ENCODE measurements at regions of chr6 and their contacts with region 1.

Region 1: DNA sequence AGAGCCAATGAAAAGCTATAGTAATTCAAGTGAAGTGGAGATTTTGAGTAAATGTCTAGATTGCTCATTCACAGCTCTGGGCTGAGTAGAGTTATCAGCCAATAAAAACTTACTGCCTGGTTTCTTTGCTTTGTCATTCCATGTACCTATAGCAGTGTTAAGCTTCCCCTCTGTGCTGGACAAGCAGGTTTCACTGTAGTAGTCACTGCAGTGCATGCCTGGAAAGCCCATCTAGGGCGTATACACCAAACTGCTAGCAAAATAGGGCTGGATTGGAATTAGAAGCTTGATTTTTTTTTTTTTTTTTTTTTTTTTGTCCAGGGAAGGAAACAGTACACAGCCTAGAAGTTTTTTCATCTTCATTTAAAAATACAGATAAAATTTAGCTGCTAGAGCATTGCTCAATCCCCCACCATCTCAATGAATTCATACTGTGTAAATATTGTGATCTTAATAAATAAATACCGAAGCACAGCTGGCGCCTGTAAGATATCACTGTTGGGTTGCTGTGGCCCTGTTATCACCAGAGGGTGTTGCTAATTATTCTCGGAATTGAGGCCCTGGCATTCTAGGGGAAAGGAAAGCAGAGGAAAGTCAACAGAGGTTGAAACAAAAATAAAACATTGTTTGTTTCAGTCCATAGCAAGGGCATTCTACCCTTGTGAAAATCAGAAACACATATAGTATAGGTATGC is 968.5 kb upstream of the GJE1 start:
- DNase-seq: no peak
- ATAC-seq: no peak
- H3K4me3 ChIP-seq: no peak overlapping the region
- H3K27ac ChIP-seq: no peak overlapping the region
- H3K4me1 ChIP-seq: no peaks in the 10 kb centered on the region
- H3K27me3 ChIP-seq: no peaks in the 10 kb centered on the region
- CTCF ChIP-seq: no peak

Region 2: DNA sequence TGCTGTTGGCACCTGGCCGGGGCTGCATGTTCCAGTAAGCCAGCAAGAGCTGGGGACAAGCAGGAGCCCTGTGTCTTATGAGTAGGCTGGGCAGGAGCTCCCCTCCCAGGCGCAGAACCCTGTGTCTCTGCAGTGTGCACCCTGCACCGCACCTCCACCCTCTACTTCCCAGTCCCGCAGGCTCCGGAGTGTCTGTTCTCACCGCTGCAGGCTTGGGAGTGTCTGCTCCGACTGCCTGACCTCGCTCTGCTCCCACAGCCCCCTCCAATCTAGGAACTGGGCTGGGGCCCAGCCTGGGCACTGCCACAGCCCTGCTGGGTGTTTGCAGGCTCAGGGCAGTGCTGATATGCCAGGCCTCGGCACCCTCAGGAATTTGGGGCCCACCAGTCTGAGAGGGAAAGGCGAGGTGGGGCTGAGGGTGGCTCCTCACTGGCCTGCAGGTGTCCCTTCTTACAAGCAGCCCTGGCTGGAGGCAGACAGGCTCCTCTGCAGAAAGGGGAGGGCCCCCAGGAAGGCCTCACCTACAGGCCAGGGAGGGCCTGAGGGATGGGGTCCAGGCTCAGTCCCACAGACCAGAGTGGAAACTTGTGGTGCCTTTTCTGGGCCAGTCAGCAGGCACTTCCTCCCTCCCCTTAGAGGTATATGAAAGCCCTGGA is 97.0 kb after region 1 on chr6:
- CTCF ChIA-PET with region 1: no interaction called
- POLR2A ChIA-PET with region 1: interaction called, 11 read pairs
- in situ Hi-C with region 1: no loop called
- intact Hi-C with region 1: no loop called
- DNase-seq: no peak
- ATAC-seq: peak; percentile 65
- H3K4me3 ChIP-seq: no peak overlapping the region
- H3K27ac ChIP-seq: no peak overlapping the region
- H3K4me1 ChIP-seq: peaks cover 7% of the 10 kb centered on the region; the same call in 1 of the 2 replicates
- H3K27me3 ChIP-seq: no peaks in the 10 kb centered on the region
- CTCF ChIP-seq: no peak